Right ventricle myocardium inferior (tissue), 1 donor: ENCODE measurements at regions of chr14 and their contacts with region 1.

Region 1: GRCh38 chr14:49633640-49634546 is 1.2 kb downstream of the DNAAF2 start:
- DNase-seq: peak; percentile 96
- ATAC-seq: peak; percentile 97

Region 2: DNA sequence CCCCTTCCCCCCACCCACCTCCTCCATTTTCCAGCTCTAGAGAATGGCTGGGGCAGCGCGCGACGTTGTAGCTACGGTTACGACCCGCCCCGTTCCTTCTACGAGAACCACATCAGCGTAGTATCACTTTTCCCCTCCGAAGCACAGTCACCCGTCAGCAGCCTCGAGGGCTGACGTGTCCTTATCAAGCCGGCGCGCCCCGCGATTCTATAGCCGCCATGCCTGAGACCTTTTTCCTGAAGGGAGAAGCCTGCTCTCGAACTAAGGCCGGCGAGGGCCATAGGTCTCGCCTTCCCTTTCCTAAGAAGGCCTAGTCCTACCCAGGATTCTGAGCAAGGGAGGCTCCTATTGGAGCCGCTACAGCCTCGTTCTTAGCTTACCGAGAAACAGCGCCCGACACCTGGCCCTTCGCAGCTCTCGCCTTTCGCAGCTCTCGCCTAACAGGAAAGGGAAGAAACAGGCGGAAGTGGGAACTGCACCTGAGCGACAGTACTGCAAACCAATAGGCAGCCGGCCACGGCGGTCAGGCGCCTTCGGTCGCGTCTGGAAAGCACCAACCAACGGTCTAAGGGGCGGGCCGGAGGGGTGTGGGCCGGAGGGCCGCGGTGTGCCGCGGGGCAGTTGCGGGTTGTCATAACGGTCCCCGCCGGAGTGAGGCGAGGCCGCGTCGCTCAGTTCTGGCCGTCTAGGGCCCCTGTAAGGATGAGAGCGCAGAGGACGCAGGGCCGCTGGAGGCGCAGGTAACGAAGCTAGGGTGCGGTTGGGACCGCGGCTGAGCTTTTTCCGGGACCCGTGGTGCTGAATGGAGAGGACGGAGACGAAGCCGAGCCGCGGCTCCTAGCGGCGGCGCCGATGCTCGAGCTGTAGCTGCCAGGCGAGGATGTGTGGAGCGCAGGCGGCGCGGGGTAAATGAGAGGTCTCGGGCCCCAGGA is 13.4 kb before region 1 on chr14 and contains the starts of genes MGAT2 and RPL36AL:
- intact Hi-C with region 1: loop called (anchors 2 kb)
- DNase-seq: peak; percentile 99
- ATAC-seq: peak; percentile 100
- total RNA-seq, gene MGAT2: 10.8 TPM
- total RNA-seq, gene RPL36AL: 138 TPM

Region 3: GRCh38 chr14:49692811-49693734 is 59.2 kb after region 1 on chr14 and contains the start of gene KLHDC1:
- intact Hi-C with region 1: loop called (anchors 2 kb)
- DNase-seq: peak; percentile 96
- ATAC-seq: peak; percentile 95
- total RNA-seq, gene KLHDC1: 7.1 TPM

Region 4: GRCh38 chr14:49767562-49768300 is 133.8 kb after region 1 on chr14 and contains the start of gene KLHDC2:
- intact Hi-C with region 1: loop called (anchors 2 kb)
- DNase-seq: peak; percentile 97
- ATAC-seq: peak; percentile 96
- total RNA-seq, gene KLHDC2: 84.4 TPM

Region 5: GRCh38 chr14:51382506-51382905 is 1748.6 kb after region 1 on chr14:
- intact Hi-C with region 1: no loop called
- DNase-seq: no peak
- ATAC-seq: no peak